Natural killer cell (primary cell): ENCODE measurements at regions of chr13 and their contacts with region 1.

Region 1: GRCh38 chr13:39684531-39685137 is 29.2 kb downstream of the COG6 start:
- DNase-seq: peak in 1 of 2 donors; percentile 48
- ATAC-seq: peak in 1 of 3 donors; percentile 46
- H3K4me3 ChIP-seq: no peak overlapping the region
- H3K4me3 Mint-ChIP-seq: no peak overlapping the region
- H3K27ac ChIP-seq: no peak overlapping the region
- H3K27ac Mint-ChIP-seq: no peak overlapping the region
- H3K4me1 ChIP-seq: no peaks in the 10 kb centered on the region
- H3K4me1 Mint-ChIP-seq: peaks cover 14% of the 10 kb centered on the region in 2 donors
- H3K27me3 ChIP-seq: no peaks in the 10 kb centered on the region
- H3K27me3 Mint-ChIP-seq: no peaks in the 10 kb centered on the region
- CTCF ChIP-seq: peak; percentile 63

Region 2: DNA sequence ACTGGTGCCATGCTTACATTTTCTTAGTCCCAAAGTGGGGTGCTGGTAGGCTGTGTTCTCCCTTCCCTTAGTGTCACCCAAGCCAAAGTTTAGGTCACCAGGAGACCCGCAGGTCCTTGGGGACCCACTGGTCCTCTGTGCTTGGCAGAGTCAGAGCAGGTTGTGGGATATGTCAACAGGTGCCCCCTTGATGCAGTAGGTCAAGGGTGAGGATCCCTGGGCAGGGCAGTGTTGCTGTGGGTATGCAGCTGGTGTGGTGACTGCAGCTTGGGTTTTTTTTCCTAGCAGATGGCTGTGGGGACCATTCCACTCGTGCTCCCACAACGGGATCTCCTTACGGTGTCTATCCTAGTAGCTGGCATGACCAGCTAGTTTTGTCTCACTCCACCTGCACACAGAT is 622.6 kb before region 1 on chr13:
- intact Hi-C with region 1: no loop called
- DNase-seq: no peak
- ATAC-seq: no peak
- H3K4me3 ChIP-seq: no peak overlapping the region
- H3K4me3 Mint-ChIP-seq: no peak overlapping the region
- H3K27ac ChIP-seq: no peak overlapping the region
- H3K27ac Mint-ChIP-seq: no peak overlapping the region
- H3K4me1 ChIP-seq: no peaks in the 10 kb centered on the region
- H3K4me1 Mint-ChIP-seq: peaks cover 48 to 49% of the 10 kb centered on the region in 2 donors
- H3K27me3 ChIP-seq: no peaks in the 10 kb centered on the region
- H3K27me3 Mint-ChIP-seq: no peaks in the 10 kb centered on the region
- CTCF ChIP-seq: no peak

Region 3: GRCh38 chr13:39417131-39417530 is 267.5 kb before region 1 on chr13:
- intact Hi-C with region 1: no loop called
- DNase-seq: no peak
- ATAC-seq: no peak
- H3K4me3 ChIP-seq: no peak overlapping the region
- H3K4me3 Mint-ChIP-seq: no peak overlapping the region
- H3K27ac ChIP-seq: no peak overlapping the region
- H3K27ac Mint-ChIP-seq: no peak overlapping the region
- H3K4me1 ChIP-seq: no peaks in the 10 kb centered on the region
- H3K4me1 Mint-ChIP-seq: no peaks in the 10 kb centered on the region
- H3K27me3 ChIP-seq: no peaks in the 10 kb centered on the region
- H3K27me3 Mint-ChIP-seq: peaks cover 0 to 3% of the 10 kb centered on the region in 2 donors
- CTCF ChIP-seq: no peak

Region 4: DNA sequence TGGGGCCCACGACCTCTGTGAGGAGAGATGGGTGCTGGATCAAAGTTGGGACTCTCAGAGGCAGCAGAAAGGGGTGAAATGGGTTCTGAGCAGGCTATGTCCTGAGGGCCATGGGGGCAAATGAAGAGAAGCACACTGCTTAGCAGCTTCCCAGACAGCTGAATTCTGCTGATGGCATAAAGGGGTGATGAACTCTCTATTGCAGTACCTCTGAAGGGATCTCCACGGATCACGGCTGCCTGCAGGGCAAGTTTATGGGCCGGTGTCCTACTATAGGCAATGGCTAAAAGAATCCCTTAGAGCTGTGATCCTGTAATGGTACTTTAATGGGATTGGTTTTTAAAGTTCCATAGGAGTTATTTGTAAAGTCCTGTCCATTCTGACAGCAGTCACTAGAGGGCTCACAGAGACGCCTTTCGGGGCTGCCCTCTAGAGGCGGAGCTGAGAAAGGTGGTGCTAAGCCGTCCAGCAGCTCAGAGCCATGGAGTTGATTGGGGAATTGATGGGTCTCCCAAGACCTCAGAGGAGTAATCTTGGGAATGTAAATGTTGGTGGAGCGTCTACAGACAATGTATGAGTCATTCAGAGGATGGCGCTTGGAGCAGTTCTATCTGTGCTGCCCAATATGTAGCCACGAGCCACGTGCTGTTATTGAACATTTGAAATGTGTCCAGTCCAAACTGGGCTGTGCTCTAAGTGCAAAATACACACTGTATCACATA is 258.1 kb after region 1 on chr13:
- intact Hi-C with region 1: loop called (anchors 5 kb)
- DNase-seq: peak; percentile 41 to 83
- ATAC-seq: peak; percentile 89 to 100 (median 99)
- H3K4me3 ChIP-seq: no peak overlapping the region
- H3K4me3 Mint-ChIP-seq: no peak overlapping the region
- H3K27ac ChIP-seq: no peak overlapping the region
- H3K27ac Mint-ChIP-seq: no peak overlapping the region
- H3K4me1 ChIP-seq: no peaks in the 10 kb centered on the region
- H3K4me1 Mint-ChIP-seq: peaks cover 0 to 6% of the 10 kb centered on the region in 2 donors
- H3K27me3 ChIP-seq: no peaks in the 10 kb centered on the region
- H3K27me3 Mint-ChIP-seq: peaks cover 9 to 19% of the 10 kb centered on the region in 2 donors
- CTCF ChIP-seq: peak; percentile 98